CD8-positive, alpha-beta T cell (primary cell): ENCODE measurements at regions of chr1 and their contacts with region 1.

Region 1: GRCh38 chr1:203861379-203862184 is at the start of gene SNRPE:
- DNase-seq: peak; percentile 91 to 99 (median 96)
- ATAC-seq: peak; percentile 98
- H3K4me3 ChIP-seq: peak within 1 kb of the TSS; percentile 92 to 97
- H3K4me3 Mint-ChIP-seq: peak within 1 kb of the TSS; percentile 97
- H3K27ac ChIP-seq: peak within 1 kb of the TSS; percentile 80 to 86
- H3K27ac Mint-ChIP-seq: peak within 1 kb of the TSS; percentile 96
- H3K4me1 ChIP-seq: peaks cover 11% of the 10 kb centered on the region
- H3K4me1 Mint-ChIP-seq: peaks cover 21% of the 10 kb centered on the region
- H3K27me3 ChIP-seq: no peaks in the 10 kb centered on the region
- H3K27me3 Mint-ChIP-seq: no peaks in the 10 kb centered on the region
- CTCF ChIP-seq: peak; percentile 91
- total RNA-seq, gene SNRPE: 66.5 to 84.0 TPM

Region 2: GRCh38 chr1:203273206-203273868 is 588.2 kb before region 1 on chr1:
- CTCF ChIA-PET with region 1: no interaction called
- POLR2A ChIA-PET with region 1: no interaction called
- intact Hi-C with region 1: loop called in 1 of 2 experiments (anchors 5 kb)
- DNase-seq: peak; percentile 82 to 97 (median 92)
- ATAC-seq: peak; percentile 66
- H3K4me3 ChIP-seq: peak overlapping the region; percentile 37 to 63
- H3K4me3 Mint-ChIP-seq: peak overlapping the region; percentile 74
- H3K27ac ChIP-seq: peak overlapping the region; percentile 10 to 48
- H3K27ac Mint-ChIP-seq: peak overlapping the region; percentile 92
- H3K4me1 ChIP-seq: peaks cover 49% of the 10 kb centered on the region
- H3K4me1 Mint-ChIP-seq: peaks cover 52% of the 10 kb centered on the region
- H3K27me3 ChIP-seq: no peaks in the 10 kb centered on the region
- H3K27me3 Mint-ChIP-seq: no peaks in the 10 kb centered on the region
- CTCF ChIP-seq: peak; percentile 94

Region 3: DNA sequence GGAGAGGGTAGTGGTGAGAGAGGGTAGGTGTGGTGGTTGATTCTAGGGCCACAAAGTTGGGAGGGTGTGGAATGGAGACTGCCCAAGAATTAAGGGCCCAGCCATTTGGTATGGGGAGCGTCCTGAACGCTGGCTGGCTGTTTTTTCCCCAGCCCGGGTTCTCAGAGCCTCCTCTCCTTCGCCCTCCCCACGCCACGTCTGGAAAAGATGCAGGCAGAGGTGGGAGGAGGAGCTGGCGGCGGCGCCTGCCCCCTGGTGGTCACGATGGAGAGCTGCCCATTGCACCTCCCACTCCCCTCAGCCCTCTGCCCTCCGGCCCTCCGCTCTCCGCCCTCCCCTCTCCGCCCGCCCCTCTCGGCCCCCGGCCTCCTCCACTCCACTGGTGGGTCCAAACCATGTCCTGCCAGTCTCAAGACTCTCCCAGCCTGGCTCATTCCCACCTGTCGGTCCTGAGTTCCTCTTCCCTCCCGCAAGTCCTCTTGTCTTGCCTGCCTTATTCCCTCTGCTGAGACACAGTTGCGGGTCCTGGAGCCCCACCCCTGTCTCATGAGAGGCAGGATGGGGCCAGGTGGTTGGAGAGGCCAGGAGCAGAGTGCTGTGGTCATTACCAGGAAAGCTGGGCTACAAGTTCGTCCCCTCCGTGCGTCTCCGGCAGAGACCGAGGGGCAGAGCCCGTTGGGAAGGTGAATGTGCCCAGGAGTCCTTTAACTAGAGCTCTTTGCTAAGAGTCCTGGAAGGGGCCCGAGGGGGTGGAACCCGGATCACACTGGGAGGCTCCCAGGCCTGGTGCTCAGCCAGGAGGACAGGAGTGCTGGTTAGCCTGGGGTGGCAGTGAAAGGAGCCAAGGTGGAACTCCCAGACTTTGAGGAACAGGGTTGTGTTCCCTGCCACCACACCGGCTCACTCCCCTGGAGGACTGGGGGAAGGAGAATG is 267.6 kb after region 1 on chr1:
- CTCF ChIA-PET with region 1: interaction called, 15 read pairs
- POLR2A ChIA-PET with region 1: interaction called, 3 read pairs
- intact Hi-C with region 1: loop called (anchors 1 kb)
- DNase-seq: peak; percentile 27 to 82 (median 57)
- ATAC-seq: peak; percentile 89
- H3K4me3 ChIP-seq: no peak overlapping the region
- H3K4me3 Mint-ChIP-seq: no peak overlapping the region
- H3K27ac ChIP-seq: no peak overlapping the region
- H3K27ac Mint-ChIP-seq: no peak overlapping the region
- H3K4me1 ChIP-seq: peaks cover 7% of the 10 kb centered on the region
- H3K4me1 Mint-ChIP-seq: peaks cover 10% of the 10 kb centered on the region
- H3K27me3 ChIP-seq: no peaks in the 10 kb centered on the region
- H3K27me3 Mint-ChIP-seq: no peaks in the 10 kb centered on the region
- CTCF ChIP-seq: peak; percentile 71

Region 4: DNA sequence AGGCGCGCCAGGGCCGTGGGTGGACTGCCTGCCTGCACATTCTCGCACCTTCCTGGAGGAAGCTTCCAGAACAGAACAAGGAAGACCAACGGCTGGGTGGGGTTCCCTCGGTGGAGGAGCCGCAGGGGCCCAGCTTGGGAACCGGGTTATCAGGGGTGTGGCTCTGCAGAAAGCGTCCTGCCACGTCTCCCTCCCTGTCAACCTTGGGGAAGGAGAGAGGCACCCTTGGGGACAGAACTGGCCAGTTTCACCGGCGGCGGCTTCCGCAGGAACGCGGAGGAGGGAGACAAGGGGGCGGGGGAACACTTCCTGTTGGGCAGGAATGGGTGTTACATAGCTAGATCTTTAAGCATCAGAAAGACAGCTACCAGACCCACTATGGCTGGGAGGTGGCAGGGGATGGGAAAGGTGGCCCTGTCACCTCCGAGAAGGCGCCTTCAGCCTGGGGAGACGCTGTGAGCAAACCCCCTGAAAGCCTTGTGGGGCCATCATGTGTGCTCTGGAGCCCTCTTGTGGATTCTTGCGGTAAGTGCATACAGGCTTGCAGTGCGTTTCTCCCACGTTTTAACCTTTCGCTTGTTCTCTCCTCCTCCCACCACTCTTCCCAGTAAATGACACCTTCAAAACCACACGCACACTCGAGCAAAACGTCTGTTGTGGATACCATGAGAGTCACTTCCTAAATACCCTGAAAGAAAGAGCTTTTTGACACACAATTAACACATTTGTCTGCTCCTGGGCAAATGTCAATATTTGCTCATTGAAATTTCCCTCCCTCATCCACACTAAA is 501.9 kb after region 1 on chr1:
- CTCF ChIA-PET with region 1: interaction called, 4 read pairs
- POLR2A ChIA-PET with region 1: no interaction called
- intact Hi-C with region 1: loop called in 1 of 2 experiments (anchors 2 kb)
- DNase-seq: peak; percentile 52 to 90 (median 71)
- ATAC-seq: peak; percentile 99
- H3K4me3 ChIP-seq: peak overlapping the region; percentile 45 to 52
- H3K4me3 Mint-ChIP-seq: peak overlapping the region; percentile 77
- H3K27ac ChIP-seq: peak overlapping the region in 1 of 2 experiments; percentile 24
- H3K27ac Mint-ChIP-seq: no peak overlapping the region
- H3K4me1 ChIP-seq: peaks cover 10% of the 10 kb centered on the region
- H3K4me1 Mint-ChIP-seq: peaks cover 5% of the 10 kb centered on the region
- H3K27me3 ChIP-seq: no peaks in the 10 kb centered on the region
- H3K27me3 Mint-ChIP-seq: peaks cover 4% of the 10 kb centered on the region
- CTCF ChIP-seq: peak; percentile 74

Region 5: GRCh38 chr1:204516180-204516879 is 654.7 kb after region 1 on chr1 and contains the start of gene MDM4:
- CTCF ChIA-PET with region 1: no interaction called
- POLR2A ChIA-PET with region 1: no interaction called
- intact Hi-C with region 1: loop called in 1 of 2 experiments (anchors 5 kb)
- DNase-seq: peak; percentile 85 to 97 (median 90)
- ATAC-seq: peak; percentile 76
- H3K4me3 ChIP-seq: peak within 1 kb of the TSS; percentile 63 to 88
- H3K4me3 Mint-ChIP-seq: no peak within 1 kb of the TSS
- H3K27ac ChIP-seq: peak within 1 kb of the TSS; percentile 89 to 97
- H3K27ac Mint-ChIP-seq: no peak within 1 kb of the TSS
- H3K4me1 ChIP-seq: peaks cover 77% of the 10 kb centered on the region
- H3K4me1 Mint-ChIP-seq: peaks cover 65% of the 10 kb centered on the region
- H3K27me3 ChIP-seq: no peaks in the 10 kb centered on the region
- H3K27me3 Mint-ChIP-seq: no peaks in the 10 kb centered on the region
- CTCF ChIP-seq: no peak
- total RNA-seq, gene MDM4: 209 to 218 TPM

Region 6: DNA sequence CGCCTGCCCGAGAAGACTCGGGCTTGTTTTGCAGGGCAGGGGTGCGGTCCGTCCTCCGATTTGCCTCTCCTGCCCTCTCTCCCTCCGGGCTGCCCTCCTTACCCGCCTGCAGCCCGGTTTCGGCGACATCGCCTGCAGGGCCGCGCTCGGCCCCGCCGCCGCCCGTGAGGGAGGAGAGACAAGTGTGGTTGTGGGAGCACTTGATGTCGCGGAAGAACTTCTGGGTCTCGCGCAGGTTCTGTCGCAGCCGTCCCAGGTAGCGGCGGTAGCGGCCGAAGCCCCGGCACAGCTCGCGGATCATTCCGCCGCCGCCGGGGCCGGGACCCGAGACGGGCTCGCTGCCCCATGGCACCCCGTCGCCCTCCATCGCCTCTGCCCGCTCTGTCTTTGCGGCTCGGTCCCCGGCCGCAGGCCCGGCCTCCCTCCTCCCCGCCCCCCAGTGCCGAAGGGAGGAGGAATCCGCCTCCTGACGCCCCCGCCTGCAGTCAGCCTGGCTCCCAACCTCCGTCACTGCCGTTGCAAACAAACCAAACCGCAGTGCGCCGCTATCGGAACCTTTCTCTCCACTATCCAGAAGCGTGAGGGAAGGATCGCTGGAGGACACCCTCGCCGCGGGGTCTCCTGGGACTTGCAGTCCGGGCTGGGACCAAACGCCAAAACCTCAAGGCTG is 1349.7 kb after region 1 on chr1 and contains the start of gene DSTYK:
- CTCF ChIA-PET with region 1: no interaction called
- POLR2A ChIA-PET with region 1: no interaction called
- intact Hi-C with region 1: loop called in 1 of 2 experiments (anchors 2 kb)
- DNase-seq: peak; percentile 83 to 96 (median 91)
- ATAC-seq: peak; percentile 92
- H3K4me3 ChIP-seq: peak within 1 kb of the TSS; percentile 55 to 93
- H3K4me3 Mint-ChIP-seq: peak within 1 kb of the TSS; percentile 96
- H3K27ac ChIP-seq: peak within 1 kb of the TSS; percentile 58 to 80
- H3K27ac Mint-ChIP-seq: peak within 1 kb of the TSS; percentile 98
- H3K4me1 ChIP-seq: peaks cover 15% of the 10 kb centered on the region
- H3K4me1 Mint-ChIP-seq: peaks cover 50% of the 10 kb centered on the region
- H3K27me3 ChIP-seq: no peaks in the 10 kb centered on the region
- H3K27me3 Mint-ChIP-seq: no peaks in the 10 kb centered on the region
- CTCF ChIP-seq: no peak
- total RNA-seq, gene DSTYK: 15.4 to 17.2 TPM